Activated T-helper 1 cell treated with anti-CD3 and anti-CD28 coated beads, Interleukin-12 subunit alpha, Interleukin-12 subunit beta, Interleukin-2, Interleukin-4 antibody, amounts not matched to agents 30 ng/mL and 10 ng/mL and 1 ng/mL, durations not matched to agents 14 hours and 24 hours and 36 hours (primary cell): ENCODE measurements at regions of chr2 and their contacts with region 1.

Region 1: GRCh38 chr2:222424729-222425671 is 657 bp downstream of the SGPP2 start:
- DNase-seq: peak; percentile 24
- H3K4me3 Mint-ChIP-seq: peak overlapping the region; percentile 95
- H3K27ac Mint-ChIP-seq: peak overlapping the region; percentile 92
- H3K4me1 Mint-ChIP-seq: peaks cover 60% of the 10 kb centered on the region
- H3K27me3 Mint-ChIP-seq: peaks cover 13% of the 10 kb centered on the region

Region 2: GRCh38 chr2:222451224-222451674 is 26.2 kb after region 1 on chr2:
- intact Hi-C with region 1: loop called (anchors 2 kb)
- DNase-seq: no peak
- H3K4me3 Mint-ChIP-seq: no peak overlapping the region
- H3K27ac Mint-ChIP-seq: peak overlapping the region; percentile 73
- H3K4me1 Mint-ChIP-seq: peaks cover 24% of the 10 kb centered on the region
- H3K27me3 Mint-ChIP-seq: peaks cover 3% of the 10 kb centered on the region

Region 3: GRCh38 chr2:222561817-222562645 is 137.0 kb after region 1 on chr2:
- intact Hi-C with region 1: loop called (anchors 2 kb)
- DNase-seq: peak; percentile 9
- H3K4me3 Mint-ChIP-seq: no peak overlapping the region
- H3K27ac Mint-ChIP-seq: no peak overlapping the region
- H3K4me1 Mint-ChIP-seq: no peaks in the 10 kb centered on the region
- H3K27me3 Mint-ChIP-seq: no peaks in the 10 kb centered on the region

Region 4: DNA sequence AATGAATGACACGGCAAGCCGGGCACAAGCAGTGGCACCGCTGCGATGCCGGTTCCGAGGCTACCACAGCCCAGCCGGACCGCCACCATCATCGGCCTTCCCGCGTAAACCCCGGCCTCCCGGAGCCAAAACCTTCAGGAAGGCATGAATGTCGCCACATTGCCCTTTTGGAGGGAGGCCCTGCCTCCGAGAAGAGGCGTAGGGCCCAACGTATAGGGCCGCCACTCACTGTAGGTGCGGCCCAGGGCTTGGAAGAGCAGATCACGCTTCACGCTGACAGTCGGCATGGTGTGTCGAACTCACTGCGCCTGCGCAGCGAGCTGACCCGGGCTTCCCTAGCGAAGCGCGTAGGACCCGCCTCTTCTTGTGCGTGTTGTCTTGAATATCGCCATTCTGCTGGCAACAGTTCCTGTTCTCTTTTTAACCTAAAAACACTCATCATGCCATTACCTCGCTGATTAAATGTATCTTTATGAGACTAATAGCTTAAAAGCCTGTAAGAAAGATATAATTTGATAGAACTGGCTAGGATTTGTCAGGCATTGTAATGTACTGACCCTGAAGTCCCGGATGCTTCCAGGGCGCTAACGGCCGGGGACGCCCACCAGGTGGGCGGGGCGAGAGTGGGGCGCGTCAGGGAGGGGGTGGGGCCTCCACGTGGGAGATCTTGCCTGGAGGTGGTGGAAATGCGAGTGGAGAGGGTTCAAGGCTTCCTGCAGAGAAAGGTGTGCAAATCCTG is 231.0 kb after region 1 on chr2 and contains the start of gene FARSB:
- intact Hi-C with region 1: loop called (anchors 2 kb)
- DNase-seq: peak; percentile 90
- H3K4me3 Mint-ChIP-seq: peak within 1 kb of the TSS; percentile 95
- H3K27ac Mint-ChIP-seq: peak within 1 kb of the TSS; percentile 87
- H3K4me1 Mint-ChIP-seq: peaks cover 36% of the 10 kb centered on the region
- H3K27me3 Mint-ChIP-seq: no peaks in the 10 kb centered on the region
- total RNA-seq, gene FARSB: 48.9 and 53.4 TPM in 2 replicates

Region 5: GRCh38 chr2:222813177-222813843 is 388.3 kb after region 1 on chr2:
- intact Hi-C with region 1: loop called (anchors 2 kb)
- DNase-seq: no peak
- H3K4me3 Mint-ChIP-seq: peak overlapping the region; percentile 10
- H3K27ac Mint-ChIP-seq: peak overlapping the region; percentile 94
- H3K4me1 Mint-ChIP-seq: peaks cover 27% of the 10 kb centered on the region
- H3K27me3 Mint-ChIP-seq: peaks cover 7% of the 10 kb centered on the region

Region 6: DNA sequence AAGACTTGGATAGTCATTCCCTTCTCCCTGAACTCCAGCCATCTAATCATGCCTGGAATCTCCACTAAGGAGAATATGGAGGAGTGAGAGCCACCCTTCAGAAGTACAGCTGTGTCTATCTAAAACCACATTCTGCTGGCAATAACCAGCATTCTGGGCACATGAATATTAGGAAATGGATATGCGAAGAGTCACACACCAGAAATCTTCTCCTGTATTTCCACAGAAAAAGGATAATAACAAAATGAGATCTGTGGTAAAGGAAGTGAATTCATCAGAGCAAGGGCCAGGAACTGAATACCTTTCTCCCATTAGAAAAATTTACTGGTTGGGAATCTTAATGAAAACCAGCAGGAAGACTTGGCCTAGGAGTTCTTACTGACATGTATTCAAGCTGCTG is 958.3 kb after region 1 on chr2:
- intact Hi-C with region 1: no loop called
- DNase-seq: no peak
- H3K4me3 Mint-ChIP-seq: no peak overlapping the region
- H3K27ac Mint-ChIP-seq: no peak overlapping the region
- H3K4me1 Mint-ChIP-seq: no peaks in the 10 kb centered on the region
- H3K27me3 Mint-ChIP-seq: no peaks in the 10 kb centered on the region

Region 7: GRCh38 chr2:224025874-224026273 is 1600.9 kb after region 1 on chr2:
- intact Hi-C with region 1: loop called (anchors 10 kb)
- DNase-seq: peak; percentile 65
- H3K4me3 Mint-ChIP-seq: peak overlapping the region; percentile 51
- H3K27ac Mint-ChIP-seq: peak overlapping the region; percentile 87
- H3K4me1 Mint-ChIP-seq: peaks cover 77% of the 10 kb centered on the region
- H3K27me3 Mint-ChIP-seq: no peaks in the 10 kb centered on the region